Activated T-helper 1 cell treated with anti-CD3 and anti-CD28 coated beads, Interleukin-12 subunit alpha, Interleukin-12 subunit beta, Interleukin-2, Interleukin-4 antibody, amounts not matched to agents 30 ng/mL and 10 ng/mL and 1 ng/mL, durations not matched to agents 14 hours and 24 hours and 36 hours (primary cell): ENCODE measurements at regions of chr1 and their contacts with region 1.

Region 1: DNA sequence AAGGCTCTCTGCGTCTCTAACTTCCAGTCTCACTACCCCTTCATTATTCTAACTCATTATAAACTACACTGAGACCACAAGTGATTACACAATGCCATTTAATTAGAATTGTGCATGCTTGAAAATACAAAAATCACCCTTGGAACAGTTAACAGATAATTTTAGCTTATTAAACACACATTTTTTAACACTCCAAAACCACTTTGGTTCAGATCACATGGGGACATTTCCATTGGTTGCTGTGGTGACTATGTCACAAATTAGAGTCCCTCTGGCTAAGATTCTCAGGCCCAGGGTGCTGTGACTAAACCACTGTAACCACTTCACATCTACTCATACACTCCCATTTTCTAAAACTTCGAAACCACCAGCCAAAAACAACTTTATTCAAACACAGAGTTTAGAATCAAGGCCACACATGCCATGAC is 43.0 kb downstream of the JAK1 start:
- DNase-seq: no peak
- H3K4me3 Mint-ChIP-seq: peak overlapping the region; percentile 34
- H3K27ac Mint-ChIP-seq: peak overlapping the region; percentile 93
- H3K4me1 Mint-ChIP-seq: peaks cover 82% of the 10 kb centered on the region
- H3K27me3 Mint-ChIP-seq: no peaks in the 10 kb centered on the region

Region 2: DNA sequence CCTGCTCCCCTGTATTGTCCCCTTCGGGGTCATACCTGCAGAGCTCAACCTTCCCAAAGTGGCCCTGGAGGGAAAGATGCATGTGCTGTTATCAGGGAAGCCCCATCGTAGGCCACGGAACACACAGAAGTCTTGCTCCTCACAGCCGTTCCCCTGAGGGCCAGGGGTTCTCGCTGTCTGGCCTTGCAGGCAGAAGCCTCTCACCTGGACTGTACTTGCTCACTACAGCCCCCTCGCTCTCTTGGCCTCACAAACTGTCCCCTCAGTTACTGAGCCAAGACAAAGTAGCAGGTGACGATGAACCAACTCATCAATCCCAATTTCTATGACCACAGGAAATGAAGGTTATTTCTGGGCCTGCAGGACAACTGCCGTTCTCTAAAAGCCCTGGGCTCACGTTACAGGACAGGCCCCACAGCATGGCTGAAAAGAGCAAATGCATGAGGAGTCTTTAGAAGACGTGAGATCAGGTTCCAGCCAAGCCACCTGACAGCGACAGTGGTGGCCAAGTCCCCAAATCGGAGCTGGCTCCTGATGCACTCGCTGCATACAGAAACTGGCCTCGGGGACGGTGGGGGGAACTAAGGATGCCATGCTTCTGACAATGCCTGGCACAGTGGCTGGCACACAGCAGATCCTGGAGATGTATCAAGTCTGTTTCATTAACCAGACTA is 83.4 kb before region 1 on chr1:
- intact Hi-C with region 1: no loop called
- DNase-seq: no peak
- H3K4me3 Mint-ChIP-seq: no peak overlapping the region
- H3K27ac Mint-ChIP-seq: no peak overlapping the region
- H3K4me1 Mint-ChIP-seq: no peaks in the 10 kb centered on the region
- H3K27me3 Mint-ChIP-seq: no peaks in the 10 kb centered on the region

Region 3: DNA sequence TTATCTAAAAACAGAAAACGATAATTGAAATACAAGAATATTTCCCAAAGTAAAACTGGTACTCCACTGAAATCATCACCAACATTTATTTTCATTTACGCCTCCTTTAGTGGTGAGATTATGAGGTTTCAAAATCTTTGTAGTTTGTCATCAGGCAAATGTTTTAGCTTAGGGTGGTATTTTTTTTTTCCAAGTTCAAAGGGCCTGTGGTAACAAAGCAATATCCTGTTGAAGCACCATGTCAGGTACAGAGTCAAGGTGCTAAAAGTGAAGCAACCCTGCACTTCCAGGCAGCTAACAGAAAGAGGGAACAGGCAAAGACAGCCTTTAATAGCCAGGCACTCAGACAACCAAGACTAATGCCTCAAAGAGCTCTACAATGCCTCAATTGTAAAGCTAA is 46.2 kb before region 1 on chr1:
- intact Hi-C with region 1: loop called (anchors 1 kb)
- DNase-seq: peak; percentile 38
- H3K4me3 Mint-ChIP-seq: peak overlapping the region; percentile 62
- H3K27ac Mint-ChIP-seq: peak overlapping the region; percentile 51
- H3K4me1 Mint-ChIP-seq: peaks cover 61% of the 10 kb centered on the region
- H3K27me3 Mint-ChIP-seq: no peaks in the 10 kb centered on the region

Region 4: DNA sequence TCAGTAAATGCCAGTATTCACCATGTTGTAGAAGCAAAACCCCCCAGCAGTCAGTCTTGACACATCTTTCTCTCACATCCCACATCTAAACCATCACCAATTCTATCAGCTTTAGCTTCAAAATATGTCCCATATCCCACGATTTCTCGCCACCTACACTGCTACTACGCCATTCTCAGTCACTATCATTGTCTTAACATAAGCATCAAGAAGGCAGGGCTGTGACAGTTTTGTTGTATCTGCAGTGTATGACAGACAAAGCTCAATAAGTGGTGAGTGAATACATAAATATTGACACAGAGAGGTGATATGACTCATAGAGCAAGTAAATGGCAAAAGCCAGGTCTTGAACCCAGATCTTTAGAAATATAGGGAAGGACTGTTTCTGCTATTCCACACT is 16.9 kb before region 1 on chr1:
- intact Hi-C with region 1: loop called (anchors 1 kb)
- DNase-seq: no peak
- H3K4me3 Mint-ChIP-seq: peak overlapping the region; percentile 34
- H3K27ac Mint-ChIP-seq: peak overlapping the region; percentile 78
- H3K4me1 Mint-ChIP-seq: peaks cover 54% of the 10 kb centered on the region
- H3K27me3 Mint-ChIP-seq: no peaks in the 10 kb centered on the region

Region 5: DNA sequence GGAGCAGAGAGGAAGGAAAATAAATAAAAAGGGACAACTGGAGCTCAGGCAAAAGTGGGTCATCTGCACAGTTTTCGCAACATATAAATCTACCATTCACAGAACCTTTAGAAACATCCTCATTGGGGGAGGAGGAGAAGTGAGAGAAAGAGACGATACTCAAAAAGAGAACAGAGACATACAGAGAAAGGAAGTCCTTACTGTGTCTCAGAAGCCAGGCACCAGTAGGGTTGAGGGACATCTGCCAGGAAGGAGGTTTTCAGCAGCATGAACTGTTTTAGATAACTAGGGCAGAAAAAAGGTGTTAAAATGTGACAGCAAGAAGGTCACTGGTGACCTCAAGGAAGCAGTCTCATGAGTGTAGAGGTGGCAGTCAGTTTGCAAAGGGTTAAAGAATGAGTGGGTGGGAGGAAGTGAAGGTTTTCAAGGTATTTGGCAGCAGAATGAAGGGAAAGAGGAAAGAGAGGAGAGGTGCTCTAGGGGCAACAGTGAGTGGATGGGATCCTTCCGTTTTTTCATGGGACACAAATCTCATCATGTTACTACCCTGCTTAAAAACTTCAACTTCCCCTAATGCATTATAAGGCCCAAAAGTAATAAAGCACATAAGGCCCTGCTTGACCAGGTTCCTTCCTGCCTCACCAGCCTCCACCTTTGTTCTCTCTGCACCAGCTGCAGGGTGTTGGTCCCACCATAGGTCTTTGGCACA is 33.6 kb after region 1 on chr1:
- intact Hi-C with region 1: loop called (anchors 1 kb)
- DNase-seq: peak; percentile 14
- H3K4me3 Mint-ChIP-seq: no peak overlapping the region
- H3K27ac Mint-ChIP-seq: no peak overlapping the region
- H3K4me1 Mint-ChIP-seq: peaks cover 63% of the 10 kb centered on the region
- H3K27me3 Mint-ChIP-seq: no peaks in the 10 kb centered on the region

Region 6: GRCh38 chr1:65036545-65037180 is 113.4 kb after region 1 on chr1:
- intact Hi-C with region 1: loop called (anchors 2 kb)
- DNase-seq: no peak
- H3K4me3 Mint-ChIP-seq: no peak overlapping the region
- H3K27ac Mint-ChIP-seq: no peak overlapping the region
- H3K4me1 Mint-ChIP-seq: peaks cover 9% of the 10 kb centered on the region
- H3K27me3 Mint-ChIP-seq: peaks cover 5% of the 10 kb centered on the region

Region 7: GRCh38 chr1:65230731-65231481 is 307.6 kb after region 1 on chr1:
- intact Hi-C with region 1: loop called (anchors 1 kb)
- DNase-seq: no peak
- H3K4me3 Mint-ChIP-seq: no peak overlapping the region
- H3K27ac Mint-ChIP-seq: peak overlapping the region; percentile 81
- H3K4me1 Mint-ChIP-seq: peaks cover 32% of the 10 kb centered on the region
- H3K27me3 Mint-ChIP-seq: no peaks in the 10 kb centered on the region